ENCODE measurements at regions of chr1 and their contacts with region 1.

Region 1: GRCh38 chr1:241611063-241611462 is 29.1 kb downstream of the CHML start:
- DNase-seq: no peak
- ATAC-seq: peak; percentile 87
- H3K4me3 Mint-ChIP-seq: no peak overlapping the region
- H3K27ac Mint-ChIP-seq: no peak overlapping the region
- H3K4me1 Mint-ChIP-seq: peaks cover 13% of the 10 kb centered on the region
- H3K27me3 Mint-ChIP-seq: no peaks in the 10 kb centered on the region
- CTCF ChIP-seq: peak; percentile 81

Region 2: GRCh38 chr1:241525026-241525425 is 86.0 kb before region 1 on chr1:
- CTCF ChIA-PET with region 1: interaction called, 14 read pairs
- POLR2A ChIA-PET with region 1: no interaction called
- intact Hi-C with region 1: loop called (anchors 5 kb)
- DNase-seq: no peak
- ATAC-seq: no peak
- H3K4me3 Mint-ChIP-seq: no peak overlapping the region
- H3K27ac Mint-ChIP-seq: no peak overlapping the region
- H3K4me1 Mint-ChIP-seq: peaks cover 2% of the 10 kb centered on the region
- H3K27me3 Mint-ChIP-seq: peaks cover 23% of the 10 kb centered on the region
- CTCF ChIP-seq: no peak

Region 3: DNA sequence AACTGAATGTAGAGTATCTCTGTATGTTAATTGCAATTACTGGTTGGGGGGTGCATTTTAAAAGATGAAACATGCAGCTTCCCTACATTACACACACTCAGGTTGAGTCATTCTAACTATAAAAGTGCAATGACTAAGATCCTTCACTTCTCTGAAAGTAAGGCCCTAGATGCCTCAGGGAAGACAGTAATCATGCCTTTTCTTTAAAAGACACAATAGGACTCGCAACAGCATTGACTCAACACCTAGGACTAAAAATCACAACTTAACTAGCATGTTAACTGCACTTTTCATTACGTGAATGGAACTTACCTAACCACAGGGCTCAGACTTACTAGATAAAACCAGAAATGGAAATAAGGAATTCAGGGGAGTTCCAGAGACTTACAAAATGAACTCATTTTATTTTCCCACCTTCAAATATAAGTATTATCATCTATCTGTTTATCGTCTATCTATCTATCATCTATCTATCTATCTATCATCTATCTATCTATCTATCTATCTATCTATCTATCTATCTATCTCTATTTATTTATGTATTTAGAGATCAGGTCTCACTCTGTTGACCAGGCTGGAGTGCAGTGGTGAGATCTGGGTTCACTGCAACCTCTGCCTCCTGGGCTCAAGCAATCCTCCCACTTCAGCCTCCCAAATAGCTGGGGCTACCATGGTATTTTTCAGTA is 18.6 kb before region 1 on chr1:
- CTCF ChIA-PET with region 1: interaction called, 14 read pairs
- POLR2A ChIA-PET with region 1: interaction called, 6 read pairs
- intact Hi-C with region 1: no loop called
- DNase-seq: no peak
- ATAC-seq: peak; percentile 96
- H3K4me3 Mint-ChIP-seq: no peak overlapping the region
- H3K27ac Mint-ChIP-seq: peak overlapping the region; percentile 63
- H3K4me1 Mint-ChIP-seq: peaks cover 18% of the 10 kb centered on the region
- H3K27me3 Mint-ChIP-seq: no peaks in the 10 kb centered on the region
- CTCF ChIP-seq: no peak

Region 4: DNA sequence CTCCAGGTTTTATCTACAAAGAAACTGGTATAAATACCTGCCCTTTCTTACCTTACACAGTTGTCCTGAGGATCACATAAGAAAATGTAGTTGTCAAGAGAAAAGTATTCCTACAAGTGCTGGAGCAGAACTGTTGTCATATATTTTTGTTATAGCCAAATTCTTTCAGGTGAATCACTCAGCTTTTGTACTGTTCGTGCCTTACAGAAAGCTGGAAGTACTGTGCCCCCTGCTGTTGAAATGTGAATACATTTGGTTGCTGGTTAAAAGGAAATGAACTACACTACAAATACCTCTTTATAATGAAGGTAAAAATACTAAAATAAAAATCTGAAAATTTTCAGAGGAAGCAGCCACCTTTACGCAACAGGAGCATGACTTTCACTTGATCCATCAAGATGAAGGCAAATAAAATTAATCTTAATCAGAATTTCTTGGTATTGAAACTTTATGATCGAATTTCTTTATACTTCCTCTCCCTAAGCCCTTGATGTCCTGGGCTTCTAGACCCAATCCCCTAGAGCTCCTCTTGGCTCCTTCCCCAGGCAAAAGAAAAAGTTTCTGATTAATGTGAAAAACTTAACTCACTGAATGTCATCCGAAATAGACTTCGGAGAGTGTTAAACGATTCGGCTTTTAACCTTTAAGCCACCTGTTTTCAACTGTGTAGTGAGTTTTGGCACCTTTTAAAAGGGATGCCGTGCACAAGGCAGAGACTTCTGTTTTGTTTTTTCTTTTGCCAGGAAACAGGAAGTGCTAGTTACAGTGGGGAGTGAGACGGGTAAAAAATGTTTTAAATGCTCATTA is 16.6 kb after region 1 on chr1:
- CTCF ChIA-PET with region 1: interaction called, 37 read pairs
- POLR2A ChIA-PET with region 1: interaction called, 3 read pairs
- intact Hi-C with region 1: no loop called
- DNase-seq: peak; percentile 59
- ATAC-seq: peak; percentile 91
- H3K4me3 Mint-ChIP-seq: peak overlapping the region; percentile 53
- H3K27ac Mint-ChIP-seq: peak overlapping the region; percentile 85
- H3K4me1 Mint-ChIP-seq: peaks cover 31% of the 10 kb centered on the region
- H3K27me3 Mint-ChIP-seq: no peaks in the 10 kb centered on the region
- CTCF ChIP-seq: peak; percentile 73

Region 5: DNA sequence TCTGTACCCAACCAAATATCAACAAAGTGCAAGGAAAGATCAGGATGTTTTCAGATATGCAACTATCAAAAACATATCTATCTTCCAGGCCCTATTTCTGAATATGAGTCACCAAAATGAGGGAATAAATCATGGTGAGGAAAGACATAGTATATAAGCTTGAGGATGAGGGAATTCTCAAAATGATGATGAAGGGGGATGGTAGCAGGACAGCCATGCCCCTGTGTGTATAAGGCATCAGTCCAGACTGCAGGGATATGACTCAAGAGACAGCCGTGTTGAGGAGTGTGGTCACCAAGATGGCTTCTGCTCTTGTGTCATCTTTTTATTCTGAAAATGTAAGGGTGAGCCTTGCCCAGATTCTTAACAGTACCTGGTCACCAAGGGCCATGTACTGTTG is 36.6 kb after region 1 on chr1:
- CTCF ChIA-PET with region 1: no interaction called
- POLR2A ChIA-PET with region 1: no interaction called
- intact Hi-C with region 1: no loop called
- DNase-seq: no peak
- ATAC-seq: peak; percentile 39
- H3K4me3 Mint-ChIP-seq: no peak overlapping the region
- H3K27ac Mint-ChIP-seq: no peak overlapping the region
- H3K4me1 Mint-ChIP-seq: peaks cover 8% of the 10 kb centered on the region
- H3K27me3 Mint-ChIP-seq: no peaks in the 10 kb centered on the region
- CTCF ChIP-seq: no peak

Region 6: DNA sequence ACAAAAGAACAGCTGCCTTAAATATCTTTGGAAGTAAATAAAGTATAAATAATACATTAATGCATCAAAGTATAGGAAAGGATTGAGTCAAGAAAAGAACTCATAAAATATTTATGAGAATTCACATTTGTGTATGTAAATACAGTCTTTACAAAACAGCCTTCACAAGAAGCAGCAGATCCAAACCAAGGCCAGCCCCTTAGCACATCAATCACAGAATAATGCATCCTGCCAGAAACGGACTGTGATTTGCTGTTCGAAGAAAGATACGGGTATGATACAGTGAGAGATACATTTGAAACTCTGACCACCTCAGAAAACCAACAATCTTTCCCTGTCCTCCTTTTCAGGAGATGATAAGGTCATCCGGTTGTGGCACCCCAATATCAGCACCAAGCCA is 111.9 kb after region 1 on chr1:
- CTCF ChIA-PET with region 1: no interaction called
- POLR2A ChIA-PET with region 1: no interaction called
- intact Hi-C with region 1: no loop called
- DNase-seq: no peak
- ATAC-seq: no peak
- H3K4me3 Mint-ChIP-seq: no peak overlapping the region
- H3K27ac Mint-ChIP-seq: no peak overlapping the region
- H3K4me1 Mint-ChIP-seq: peaks cover 6% of the 10 kb centered on the region
- H3K27me3 Mint-ChIP-seq: no peaks in the 10 kb centered on the region
- CTCF ChIP-seq: no peak

Region 7: GRCh38 chr1:241847796-241848685 is 237.0 kb after region 1 on chr1 and contains the start of gene EXO1:
- CTCF ChIA-PET with region 1: interaction called, 8 read pairs
- POLR2A ChIA-PET with region 1: interaction called, 4 read pairs
- intact Hi-C with region 1: loop called (anchors 5 kb)
- DNase-seq: peak; percentile 95
- ATAC-seq: peak; percentile 96
- H3K4me3 Mint-ChIP-seq: peak within 1 kb of the TSS; percentile 93
- H3K27ac Mint-ChIP-seq: peak within 1 kb of the TSS; percentile 99
- H3K4me1 Mint-ChIP-seq: peaks cover 18% of the 10 kb centered on the region
- H3K27me3 Mint-ChIP-seq: no peaks in the 10 kb centered on the region
- CTCF ChIP-seq: no peak
- total RNA-seq, gene EXO1: 65.3 to 66.8 TPM

Region 8: DNA sequence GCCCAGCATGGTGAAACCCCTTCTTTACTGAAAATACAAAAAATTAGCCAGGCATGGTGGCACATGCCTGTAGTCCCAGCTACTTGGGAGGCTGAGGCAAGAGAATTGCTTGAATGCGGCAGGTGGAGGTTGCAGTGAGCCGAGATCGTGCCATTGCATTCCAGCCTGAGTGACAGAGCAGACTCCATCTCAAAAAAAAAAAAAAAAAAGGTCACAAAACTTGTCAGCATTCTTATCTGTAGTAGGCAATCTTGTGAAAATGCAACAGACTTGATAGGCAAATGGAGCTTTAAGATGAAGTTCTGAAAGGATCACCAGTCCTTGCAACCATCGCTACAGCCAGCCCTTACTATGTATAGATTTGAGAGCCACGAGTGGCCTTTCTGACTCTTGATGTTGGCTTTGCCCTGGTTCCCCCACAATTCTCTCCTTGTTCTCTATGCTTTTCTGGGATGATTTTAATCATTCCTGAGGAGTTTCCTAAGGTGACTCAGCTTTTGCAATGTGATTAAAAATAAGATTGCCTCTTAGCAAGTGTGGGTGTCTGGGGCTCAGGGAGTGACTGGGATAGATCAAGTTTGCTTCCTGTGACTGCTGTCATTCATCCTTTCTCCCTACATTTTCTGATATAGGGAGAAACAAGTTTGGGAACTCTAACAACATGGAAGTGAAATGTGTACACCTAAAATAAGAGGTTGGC is 395.0 kb after region 1 on chr1:
- CTCF ChIA-PET with region 1: no interaction called
- POLR2A ChIA-PET with region 1: no interaction called
- intact Hi-C with region 1: loop called (anchors 10 kb)
- DNase-seq: no peak
- ATAC-seq: no peak
- H3K4me3 Mint-ChIP-seq: no peak overlapping the region
- H3K27ac Mint-ChIP-seq: no peak overlapping the region
- H3K4me1 Mint-ChIP-seq: no peaks in the 10 kb centered on the region
- H3K27me3 Mint-ChIP-seq: no peaks in the 10 kb centered on the region
- CTCF ChIP-seq: no peak